H1 (cell line): ENCODE measurements at regions of chr5 and their contacts with region 1.

Region 1: DNA sequence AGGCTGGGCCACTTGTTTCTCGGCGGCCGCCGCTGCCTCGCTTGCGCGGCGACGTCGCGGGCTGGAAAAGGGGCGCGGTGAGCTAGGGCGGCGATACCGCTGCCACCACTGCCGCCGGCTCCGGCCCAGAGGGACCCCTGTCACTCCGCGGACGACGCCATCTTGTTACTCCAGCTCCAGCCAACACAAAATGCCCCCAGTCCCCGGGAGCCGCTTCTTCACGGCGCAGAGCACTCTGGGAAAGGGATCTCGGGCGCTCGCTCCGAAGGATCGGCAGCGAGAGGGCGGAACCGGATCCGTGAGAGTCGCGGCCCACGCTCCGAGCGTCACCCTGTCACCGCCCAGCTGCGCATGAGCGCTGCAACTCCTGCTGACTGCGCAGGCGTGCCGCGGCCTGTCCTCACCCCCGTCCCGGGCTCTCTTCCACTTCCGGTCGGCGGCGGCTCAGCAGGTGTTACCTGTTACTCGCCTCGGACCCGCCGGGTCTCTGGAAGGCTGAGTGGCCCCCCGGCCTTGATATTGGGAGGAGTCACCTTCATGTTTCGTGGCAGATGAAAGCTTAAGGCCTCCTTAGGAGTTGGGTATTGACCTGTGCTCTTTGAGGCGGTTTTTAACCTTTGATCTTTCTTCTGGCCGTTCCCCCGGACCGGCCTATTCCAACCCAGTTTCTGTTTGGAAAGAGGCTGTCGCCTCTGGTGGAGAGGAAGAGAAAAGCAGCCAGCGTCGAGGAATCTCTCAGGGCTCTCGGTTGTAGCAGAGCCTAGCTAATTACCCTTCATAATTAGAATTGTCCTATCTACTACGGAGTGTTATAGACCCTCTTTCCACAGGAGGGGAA is at the start of gene CSNK1A1:
- DNase-seq: peak; percentile 97 to 98
- H3K4me3 ChIP-seq: peak within 1 kb of the TSS; percentile 97 to 100 (median 99)
- H3K27ac ChIP-seq: peak within 1 kb of the TSS; percentile 93
- H3K4me1 ChIP-seq: peaks cover 0 to 4% (median 2%) of the 10 kb centered on the region in 4 experiments; a peak in 4 of 7 replicates
- H3K27me3 ChIP-seq: no peaks in the 10 kb centered on the region
- CTCF ChIP-seq: peak; percentile 41 to 62 (median 44); a peak in 3 of 4 replicates
- EP300 ChIP-seq: no peak
- POLR2A ChIP-seq: peak; percentile 48 to 84
- RAD21 ChIP-seq: peak; percentile 57 to 58
- total RNA-seq, gene CSNK1A1: 244 and 254 TPM in 2 replicates

Region 2: DNA sequence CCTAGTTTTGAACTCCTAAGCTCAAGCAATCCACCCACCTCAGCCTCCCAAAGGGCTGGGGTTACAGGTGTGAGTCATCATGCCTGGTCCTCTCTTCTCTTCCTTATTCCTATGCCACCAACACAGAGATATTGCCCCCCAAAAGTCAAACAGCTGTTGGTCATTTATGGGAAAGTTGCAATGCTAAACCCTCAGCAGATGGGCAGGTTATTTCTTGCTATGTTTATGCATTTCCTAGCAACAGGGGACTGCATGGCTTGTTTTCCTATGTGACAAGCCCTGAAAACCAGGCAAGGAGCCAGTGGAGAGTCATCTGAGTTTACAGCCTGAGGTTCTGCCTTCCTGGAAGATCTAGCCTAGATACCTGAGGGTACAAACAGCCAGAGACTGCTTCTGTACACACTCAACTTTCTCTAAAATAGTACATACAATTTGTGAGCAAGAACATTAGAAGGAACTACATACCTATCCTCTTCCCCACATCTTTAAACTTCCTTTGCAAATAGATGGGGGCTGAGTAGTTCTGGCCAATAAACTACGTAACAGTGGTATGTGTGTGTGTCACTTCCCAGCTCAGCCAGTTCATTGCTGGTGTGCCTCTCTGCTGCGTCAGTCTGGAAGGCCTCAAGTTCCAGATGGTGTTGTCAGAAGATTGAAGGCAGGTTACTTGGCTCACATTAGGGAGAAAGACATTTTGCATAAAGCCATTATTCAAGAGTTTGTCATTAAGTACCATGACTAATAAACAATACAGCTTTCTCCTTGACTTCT is 65.6 kb before region 1 on chr5:
- CTCF ChIA-PET with region 1: interaction called, 4 read pairs
- POLR2A ChIA-PET with region 1: interaction called, 34 read pairs
- DNase-seq: no peak
- H3K4me3 ChIP-seq: no peak overlapping the region
- H3K27ac ChIP-seq: no peak overlapping the region
- H3K4me1 ChIP-seq: no peaks in the 10 kb centered on the region
- H3K27me3 ChIP-seq: no peaks in the 10 kb centered on the region
- CTCF ChIP-seq: no peak
- EP300 ChIP-seq: no peak
- POLR2A ChIP-seq: no peak
- RAD21 ChIP-seq: no peak

Region 3: GRCh38 chr5:149517461-149518122 is 33.8 kb before region 1 on chr5:
- CTCF ChIA-PET with region 1: interaction called, 10 read pairs
- POLR2A ChIA-PET with region 1: interaction called, 65 read pairs
- DNase-seq: no peak
- H3K4me3 ChIP-seq: no peak overlapping the region
- H3K27ac ChIP-seq: no peak overlapping the region
- H3K4me1 ChIP-seq: peaks cover 0 to 15% (median 10%) of the 10 kb centered on the region in 4 experiments; a peak in 5 of 7 replicates
- H3K27me3 ChIP-seq: no peaks in the 10 kb centered on the region
- CTCF ChIP-seq: no peak
- EP300 ChIP-seq: no peak
- POLR2A ChIP-seq: no peak
- RAD21 ChIP-seq: no peak

Region 4: DNA sequence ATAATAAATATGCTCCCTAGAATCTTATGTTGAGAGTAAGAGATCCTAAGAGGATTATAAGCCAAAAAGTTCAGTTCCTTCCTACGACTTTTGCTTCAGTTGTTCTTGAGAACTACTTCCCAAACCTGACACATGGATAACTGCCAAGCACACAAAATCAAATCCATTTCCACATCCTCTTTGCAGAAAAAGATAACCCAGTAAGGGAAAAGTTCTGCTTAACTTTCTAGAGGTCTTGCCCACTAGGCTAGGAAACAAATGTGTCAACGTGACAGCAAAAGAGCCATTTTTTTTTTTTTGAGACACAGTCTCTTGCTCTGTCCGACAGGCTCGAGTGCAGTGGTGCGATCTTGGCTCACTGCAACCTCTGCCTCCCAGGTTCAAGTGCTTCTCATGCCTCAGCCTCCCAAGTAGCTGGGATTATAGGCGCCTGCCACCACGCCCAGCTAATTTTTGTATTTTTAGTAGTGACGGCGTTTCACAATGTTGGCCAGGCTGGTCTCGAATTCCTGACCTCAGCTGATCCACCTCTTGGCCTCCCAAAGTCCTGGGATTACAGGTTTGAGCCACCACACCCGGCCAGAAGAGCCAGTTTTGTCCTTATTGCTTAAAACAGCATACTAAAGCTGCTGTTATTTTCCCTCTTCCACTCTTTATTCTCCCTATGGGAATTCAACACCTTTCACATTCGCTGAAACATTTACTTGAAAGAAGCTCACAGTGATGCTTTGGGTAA is 24.4 kb before region 1 on chr5:
- CTCF ChIA-PET with region 1: interaction called, 10 read pairs
- POLR2A ChIA-PET with region 1: interaction called, 14 read pairs
- DNase-seq: no peak
- H3K4me3 ChIP-seq: no peak overlapping the region
- H3K27ac ChIP-seq: no peak overlapping the region
- H3K4me1 ChIP-seq: peaks cover 0 to 11% (median 2%) of the 10 kb centered on the region in 4 experiments; a peak in 3 of 7 replicates
- H3K27me3 ChIP-seq: no peaks in the 10 kb centered on the region
- CTCF ChIP-seq: no peak
- EP300 ChIP-seq: no peak
- POLR2A ChIP-seq: no peak
- RAD21 ChIP-seq: no peak

Region 5: DNA sequence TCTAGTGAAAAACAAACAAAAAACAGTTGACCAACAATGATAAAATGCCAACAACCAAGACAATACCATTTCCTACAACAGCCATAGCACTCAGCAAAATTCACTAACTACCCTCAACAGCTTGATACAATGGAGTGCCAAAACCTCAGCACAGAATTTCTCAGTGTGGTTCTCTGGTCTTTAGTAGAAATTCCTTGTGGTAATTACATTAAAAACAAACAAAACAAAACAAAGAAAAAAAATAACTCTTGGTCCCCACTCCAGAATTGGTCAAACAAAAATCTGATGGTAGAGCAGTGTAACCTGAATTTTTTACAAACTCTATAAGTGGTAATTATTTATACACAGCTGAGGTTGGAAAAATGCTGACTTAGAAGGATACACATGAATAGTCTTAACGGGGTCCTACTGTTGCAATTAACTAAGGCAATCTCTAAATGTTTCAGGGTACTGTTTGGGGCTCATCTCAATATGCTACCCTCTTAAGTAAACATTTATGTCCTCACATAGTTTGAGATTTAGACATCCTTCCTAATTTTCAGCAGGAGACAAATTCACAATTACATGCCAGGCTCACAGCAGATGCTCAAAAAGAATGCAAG is 13.9 kb before region 1 on chr5:
- CTCF ChIA-PET with region 1: interaction called, 6 read pairs
- POLR2A ChIA-PET with region 1: interaction called, 37 read pairs
- DNase-seq: no peak
- H3K4me3 ChIP-seq: no peak overlapping the region
- H3K27ac ChIP-seq: no peak overlapping the region
- H3K4me1 ChIP-seq: peaks cover 0 to 3% (median 0%) of the 10 kb centered on the region in 4 experiments; a peak in 2 of 7 replicates
- H3K27me3 ChIP-seq: no peaks in the 10 kb centered on the region
- CTCF ChIP-seq: no peak
- EP300 ChIP-seq: no peak
- POLR2A ChIP-seq: no peak
- RAD21 ChIP-seq: no peak

Region 6: DNA sequence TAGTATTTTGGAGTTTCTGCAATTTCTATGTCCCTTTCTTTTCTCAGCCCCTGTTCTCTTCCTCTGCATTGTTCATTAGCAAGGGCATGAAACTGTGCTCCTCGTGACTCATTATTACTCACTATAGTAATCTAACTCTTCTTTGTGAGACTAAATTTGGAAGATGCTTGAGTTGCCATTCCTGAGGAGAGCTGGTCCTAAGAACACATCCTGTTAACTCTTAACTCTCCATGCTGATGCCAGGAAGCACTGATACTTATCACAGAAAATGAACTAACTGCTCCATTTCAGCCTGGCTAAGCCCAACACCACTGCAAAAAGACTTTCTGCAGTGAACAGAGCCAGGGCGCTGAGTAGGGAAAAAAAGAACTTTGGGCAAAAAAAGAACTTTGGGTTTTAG is 10.4 kb after region 1 on chr5:
- CTCF ChIA-PET with region 1: interaction called, 30 read pairs
- POLR2A ChIA-PET with region 1: interaction called, 24 read pairs
- DNase-seq: no peak
- H3K4me3 ChIP-seq: no peak overlapping the region
- H3K27ac ChIP-seq: peak overlapping the region; percentile 51; the same call in 1 of the 2 replicates
- H3K4me1 ChIP-seq: peaks cover 5 to 12% (median 7%) of the 10 kb centered on the region in 4 experiments; a peak in 6 of 7 replicates
- H3K27me3 ChIP-seq: no peaks in the 10 kb centered on the region
- CTCF ChIP-seq: no peak
- EP300 ChIP-seq: no peak
- POLR2A ChIP-seq: no peak
- RAD21 ChIP-seq: no peak